AG04449 (cell line): ENCODE measurements at regions of chr10 and their contacts with region 1.

Region 1: DNA sequence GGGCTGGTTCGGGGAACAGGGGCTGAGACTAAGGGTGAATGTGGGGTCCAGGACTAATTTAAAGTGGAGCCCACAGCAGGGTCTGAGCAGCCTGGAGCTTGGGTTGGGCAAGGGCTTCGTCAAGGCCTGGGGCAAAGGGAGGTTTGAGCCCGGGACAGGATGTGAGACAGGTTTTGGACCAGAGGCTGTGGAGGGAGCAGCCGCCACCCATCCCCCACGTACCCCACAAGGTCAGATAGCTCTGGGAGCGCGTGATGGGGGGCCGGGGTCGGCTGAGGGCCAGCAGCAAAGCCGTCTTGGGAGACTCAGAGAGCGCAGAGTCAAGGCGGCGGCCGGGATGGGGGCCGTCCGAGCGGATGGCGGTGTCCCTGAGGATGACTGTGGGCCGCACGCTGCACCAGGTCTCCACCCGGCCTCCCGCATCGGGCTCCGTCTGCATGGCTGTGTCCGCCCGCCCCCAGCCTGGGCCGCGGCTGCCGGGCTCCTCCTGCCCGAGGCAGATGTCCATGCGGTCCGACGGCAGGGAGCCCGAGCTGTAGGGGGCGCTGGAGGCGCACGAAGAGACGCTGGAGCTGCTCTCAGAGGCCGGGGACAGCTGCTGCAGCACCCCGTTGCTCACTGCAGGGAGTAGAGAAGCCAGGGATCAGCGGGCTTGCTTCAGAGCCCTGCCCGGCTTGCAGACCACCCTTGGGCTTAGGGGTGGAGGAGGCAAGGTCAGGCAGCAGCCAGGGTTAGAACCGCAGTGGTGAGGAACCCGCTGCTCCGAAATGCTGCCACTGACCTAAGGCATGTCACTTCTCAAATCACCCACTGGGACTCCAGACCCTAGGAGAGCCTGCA is 12.1 kb downstream of the PDZD7 start:
- DNase-seq: no peak
- H3K4me3 ChIP-seq: no peak overlapping the region
- CTCF ChIP-seq: peak; percentile 98

Region 2: DNA sequence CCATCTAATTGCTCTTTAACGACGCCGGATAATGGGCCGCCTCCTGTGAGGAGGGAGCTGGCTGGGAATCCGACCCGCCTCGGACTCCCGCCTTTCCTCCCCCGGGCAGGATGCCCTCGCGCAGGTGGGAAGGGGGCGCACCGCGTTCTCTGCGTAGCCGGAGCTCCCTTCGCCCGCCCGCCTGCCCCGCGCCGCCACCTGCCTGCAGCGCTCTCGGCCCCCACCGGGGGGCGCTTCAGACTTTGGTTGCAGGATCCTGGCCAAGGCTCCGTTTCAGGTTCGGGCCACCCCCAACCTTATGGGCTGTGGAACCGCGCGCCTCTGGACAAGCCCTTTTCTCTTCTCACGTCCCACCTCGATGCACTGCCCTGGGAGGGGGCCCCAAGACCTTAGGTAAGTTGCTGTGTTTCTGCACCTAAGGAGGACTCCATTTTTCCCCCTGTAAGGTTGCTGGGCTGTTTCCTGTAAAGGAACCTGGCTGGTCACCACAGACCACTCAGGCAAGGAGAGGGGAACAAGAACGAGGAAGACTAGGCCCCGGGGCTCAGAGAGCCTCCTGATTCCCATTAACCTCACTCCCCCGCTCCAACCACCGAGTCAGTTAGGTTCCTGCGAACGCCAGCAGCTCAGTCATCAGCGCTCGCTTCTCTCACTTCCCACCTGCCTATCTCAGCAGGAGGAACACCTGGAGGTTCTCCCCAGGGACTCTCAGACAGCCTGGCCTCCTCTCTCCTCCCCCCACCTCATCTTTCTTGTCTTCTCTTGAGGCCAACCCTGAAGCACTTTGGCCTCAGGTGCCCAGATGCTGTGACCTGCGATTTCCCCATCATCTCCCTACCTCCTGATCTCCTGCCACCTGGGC is 31.6 kb after region 1 on chr10:
- CTCF ChIA-PET with region 1: interaction called, 1,481 read pairs
- POLR2A ChIA-PET with region 1: no interaction called
- DNase-seq: no peak
- H3K4me3 ChIP-seq: peak overlapping the region; percentile 40
- CTCF ChIP-seq: peak; percentile 83

Region 3: DNA sequence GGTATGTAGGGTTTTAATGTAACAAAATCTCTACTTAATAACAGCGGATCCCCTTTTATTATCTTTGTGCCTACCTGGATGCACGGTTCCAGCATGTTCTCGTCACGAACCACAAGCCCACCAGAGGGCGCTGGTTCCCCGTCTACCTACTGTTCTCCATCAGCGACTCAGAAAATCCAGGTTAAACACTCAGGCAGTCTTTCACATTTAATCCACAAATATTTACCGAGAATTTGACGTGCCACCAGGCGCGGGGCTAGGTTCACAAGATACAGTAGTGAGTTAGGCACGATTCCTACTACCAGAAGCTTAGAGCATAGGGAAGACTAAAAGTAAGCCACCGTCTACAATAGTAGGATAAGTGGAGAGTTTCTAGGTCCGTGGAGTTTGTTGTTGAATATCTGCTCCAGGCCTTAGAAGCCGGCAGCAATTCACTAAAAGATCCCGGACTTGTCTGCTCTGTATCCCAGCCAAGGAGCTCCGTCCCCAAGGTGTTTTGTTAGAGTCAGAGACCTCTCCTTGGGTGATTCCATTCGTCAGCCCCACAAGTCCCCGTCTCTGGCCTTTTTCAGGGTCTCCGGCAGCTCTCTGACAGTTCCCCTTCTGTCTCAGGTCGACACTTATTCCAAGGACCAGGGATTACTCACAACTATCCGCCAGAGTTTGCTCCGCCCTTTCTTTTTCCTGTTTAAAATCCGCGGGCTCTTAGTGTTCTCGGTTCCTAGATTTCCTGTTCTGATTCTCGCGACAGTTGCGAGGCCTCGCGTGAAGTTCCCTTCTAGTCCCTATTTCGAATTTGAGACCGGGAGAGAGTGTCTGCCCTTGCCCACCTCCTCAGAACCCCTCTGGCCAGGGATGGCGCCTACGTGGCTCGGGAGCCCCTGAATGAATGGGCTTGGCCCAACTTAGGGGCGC is 41.5 kb after region 1 on chr10:
- CTCF ChIA-PET with region 1: interaction called, 1,481 read pairs
- POLR2A ChIA-PET with region 1: interaction called, 3 read pairs
- DNase-seq: peak; percentile 50
- H3K4me3 ChIP-seq: peak overlapping the region; percentile 96
- CTCF ChIP-seq: peak; percentile 88